ENCODE measurements at regions of chr17 and their contacts with region 1.

Region 1: DNA sequence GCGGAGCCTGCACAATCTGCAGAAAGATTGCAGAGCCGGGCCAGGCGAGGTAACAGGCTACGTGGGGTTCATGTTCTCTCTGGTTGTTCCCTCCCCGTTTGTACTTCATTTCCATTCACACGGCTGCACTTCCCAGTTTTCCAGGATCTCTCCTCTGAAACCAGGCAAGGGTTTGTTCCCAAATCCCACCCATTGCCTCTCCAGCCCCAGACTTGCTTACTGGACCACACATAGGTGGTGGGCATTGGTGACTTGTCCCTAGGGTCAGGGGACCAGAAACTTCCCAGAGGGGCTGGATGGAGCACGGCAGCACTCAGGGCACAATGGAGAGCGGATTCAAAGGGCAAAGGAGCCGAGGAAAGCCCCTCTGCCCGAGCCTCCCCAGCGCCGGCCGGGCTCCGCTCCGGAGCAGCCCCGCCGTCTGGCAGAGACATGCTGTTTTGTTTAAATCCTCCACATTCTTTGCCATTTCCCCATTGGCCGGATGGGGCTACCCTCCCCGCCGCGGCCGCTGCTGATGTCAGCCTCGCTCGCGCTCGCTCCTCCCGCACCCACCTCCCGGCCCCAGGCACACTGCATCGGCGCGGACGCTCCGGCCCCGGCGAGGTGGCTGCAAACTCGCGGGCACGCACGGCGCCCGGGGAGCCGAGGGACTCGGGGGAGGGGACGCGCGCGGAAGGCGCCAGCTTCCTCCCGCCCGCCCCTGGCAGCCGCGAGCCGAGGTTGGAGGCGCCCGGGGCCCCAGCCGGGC is at the start of gene PITPNC1:
- DNase-seq: no peak
- ATAC-seq: peak; percentile 84
- H3K4me3 ChIP-seq: peak within 1 kb of the TSS; percentile 88
- H3K27ac ChIP-seq: peak within 1 kb of the TSS; percentile 87
- H3K4me1 ChIP-seq: no peaks in the 10 kb centered on the region; the same call in 1 of the 2 replicates
- H3K27me3 ChIP-seq: no peaks in the 10 kb centered on the region
- CTCF ChIP-seq: no peak
- EP300 ChIP-seq: no peak
- POLR2A ChIP-seq: peak; percentile 82
- RAD21 ChIP-seq: no peak
- polyA plus RNA-seq, gene PITPNC1: 12.2 to 24.6 TPM

Region 2: DNA sequence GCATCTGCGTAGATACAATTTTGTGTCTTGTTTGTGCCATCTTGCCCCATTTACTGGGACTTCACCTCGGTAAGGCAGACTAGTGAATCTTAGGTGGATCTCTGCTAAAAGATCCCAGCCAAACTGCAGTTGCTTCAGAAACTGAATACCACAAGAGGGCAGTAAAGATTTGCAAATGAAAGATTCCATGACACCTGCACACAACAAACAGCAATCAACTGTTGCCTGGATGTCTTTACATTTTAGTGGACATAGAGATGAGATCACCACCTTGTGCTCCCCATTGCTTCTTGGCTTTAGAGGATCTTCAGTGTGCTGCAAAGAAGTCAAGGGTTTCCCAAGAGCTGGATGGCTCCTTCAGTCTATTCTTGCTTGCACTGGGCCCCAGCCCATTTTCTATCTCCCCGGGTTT is 661.2 kb before region 1 on chr17:
- CTCF ChIA-PET with region 1: interaction called, 3 read pairs
- POLR2A ChIA-PET with region 1: no interaction called
- RAD21 ChIA-PET with region 1: no interaction called
- SMC1A ChIA-PET with region 1: interaction called, 4 read pairs
- in situ Hi-C with region 1: no loop called
- intact Hi-C with region 1: loop called (anchors 10 kb)
- DNase-seq: peak; percentile 53
- ATAC-seq: peak; percentile 34
- H3K4me3 ChIP-seq: no peak overlapping the region
- H3K27ac ChIP-seq: no peak overlapping the region
- H3K4me1 ChIP-seq: peaks cover 26% of the 10 kb centered on the region
- H3K27me3 ChIP-seq: no peaks in the 10 kb centered on the region
- CTCF ChIP-seq: peak; percentile 61 to 87 (median 84)
- EP300 ChIP-seq: no peak
- POLR2A ChIP-seq: no peak
- RAD21 ChIP-seq: peak; percentile 89

Region 3: DNA sequence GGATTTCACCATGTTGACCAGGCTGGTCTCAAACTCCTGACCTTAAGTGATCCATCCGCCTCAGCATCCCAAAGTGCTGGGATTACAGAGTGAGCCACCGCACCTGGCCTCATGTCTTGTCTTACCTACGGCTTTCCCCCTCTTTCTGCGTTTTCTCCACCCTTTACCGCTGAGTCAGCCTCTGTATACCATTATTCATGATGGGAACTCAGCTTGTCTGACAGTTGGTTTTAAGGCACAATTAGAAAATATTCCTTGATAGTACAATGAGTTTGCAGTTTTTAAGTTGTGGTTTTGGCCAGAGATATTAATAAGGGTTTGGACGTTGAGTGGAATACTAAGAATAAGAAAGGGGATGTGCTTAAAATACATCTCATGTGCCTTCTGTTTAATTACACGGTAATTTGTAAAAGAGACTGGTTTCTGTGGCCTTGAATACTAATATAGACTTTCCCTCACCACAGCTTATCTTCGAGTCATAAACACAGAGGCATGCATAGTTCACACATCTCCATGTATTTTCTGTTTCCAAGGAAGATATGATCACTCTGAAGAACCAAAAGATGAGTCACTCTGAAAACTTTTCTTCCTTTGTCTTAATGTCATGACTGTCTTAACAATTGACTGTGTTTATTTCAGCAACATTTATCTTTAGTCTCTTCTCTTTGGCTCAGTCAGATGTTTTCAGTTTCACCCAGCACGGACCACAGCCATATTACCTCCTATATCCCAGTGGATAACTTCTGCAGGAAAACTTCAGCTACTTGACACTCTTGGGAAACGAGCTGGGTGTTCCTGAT is 54.5 kb after region 1 on chr17:
- CTCF ChIA-PET with region 1: interaction called, 14 read pairs
- POLR2A ChIA-PET with region 1: no interaction called
- RAD21 ChIA-PET with region 1: interaction called, 3 read pairs
- SMC1A ChIA-PET with region 1: interaction called, 8 read pairs
- in situ Hi-C with region 1: no loop called
- intact Hi-C with region 1: no loop called
- DNase-seq: no peak
- ATAC-seq: peak; percentile 86
- H3K4me3 ChIP-seq: 0 out of 2 replicates have a peak overlapping the region, but pooled peaks have one; percentile 5
- H3K27ac ChIP-seq: peak overlapping the region; percentile 69
- H3K4me1 ChIP-seq: peaks cover 29% of the 10 kb centered on the region
- H3K27me3 ChIP-seq: no peaks in the 10 kb centered on the region
- CTCF ChIP-seq: no peak
- EP300 ChIP-seq: peak; percentile 77 to 80
- POLR2A ChIP-seq: no peak
- RAD21 ChIP-seq: no peak

Region 4: DNA sequence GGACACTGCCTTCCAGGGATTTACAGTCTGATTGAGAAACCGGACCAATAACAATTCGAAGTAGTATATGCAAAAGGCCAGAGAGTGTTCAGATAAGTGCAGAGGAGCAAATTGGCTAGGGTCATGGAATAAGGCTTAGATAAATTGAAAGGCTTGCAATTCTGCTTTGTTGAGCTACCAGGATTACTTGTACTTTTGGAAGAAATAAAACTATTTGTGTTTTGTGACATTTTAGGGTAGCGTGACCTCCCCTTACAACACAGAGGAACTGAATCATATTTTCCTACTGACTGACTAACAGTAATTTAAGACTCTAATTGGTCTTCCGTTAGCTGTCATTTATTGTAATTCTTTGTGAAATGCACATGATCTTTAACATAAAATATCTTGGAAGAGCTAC is 104.9 kb after region 1 on chr17:
- CTCF ChIA-PET with region 1: interaction called, 291 read pairs
- POLR2A ChIA-PET with region 1: no interaction called
- RAD21 ChIA-PET with region 1: interaction called, 74 read pairs
- SMC1A ChIA-PET with region 1: interaction called, 100 read pairs
- in situ Hi-C with region 1: no loop called
- intact Hi-C with region 1: no loop called
- DNase-seq: no peak
- ATAC-seq: no peak
- H3K4me3 ChIP-seq: no peak overlapping the region
- H3K27ac ChIP-seq: no peak overlapping the region
- H3K4me1 ChIP-seq: peaks cover 17% of the 10 kb centered on the region
- H3K27me3 ChIP-seq: no peaks in the 10 kb centered on the region
- CTCF ChIP-seq: no peak
- EP300 ChIP-seq: no peak
- POLR2A ChIP-seq: no peak
- RAD21 ChIP-seq: no peak

Region 5: DNA sequence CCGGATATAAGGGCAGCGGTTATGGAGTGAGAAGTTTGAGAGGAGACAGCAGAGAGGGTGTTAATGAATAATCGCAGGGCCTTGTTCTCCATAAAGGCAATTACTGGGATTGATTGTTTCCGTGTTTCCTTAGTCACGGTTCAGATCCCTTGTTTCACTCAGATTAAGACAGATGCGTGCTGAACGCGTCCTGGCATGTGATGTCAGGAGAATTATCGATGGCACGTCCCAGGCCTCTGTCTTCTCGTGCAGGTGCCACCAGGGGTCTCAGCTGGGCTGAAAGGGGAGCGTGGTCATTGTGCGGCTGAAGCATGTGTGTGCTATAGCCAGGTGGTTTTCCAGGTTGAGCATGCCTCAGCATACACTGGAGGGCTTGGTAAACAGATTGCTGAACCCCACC is 198.4 kb after region 1 on chr17:
- CTCF ChIA-PET with region 1: interaction called, 17 read pairs
- POLR2A ChIA-PET with region 1: interaction called, 3 read pairs
- RAD21 ChIA-PET with region 1: interaction called, 10 read pairs
- SMC1A ChIA-PET with region 1: interaction called, 17 read pairs
- in situ Hi-C with region 1: no loop called
- intact Hi-C with region 1: loop called (anchors 5 kb)
- DNase-seq: peak; percentile 68
- ATAC-seq: peak; percentile 49
- H3K4me3 ChIP-seq: peak overlapping the region; percentile 68; the same call in 1 of the 2 replicates
- H3K27ac ChIP-seq: peak overlapping the region; percentile 88
- H3K4me1 ChIP-seq: peaks cover 83% of the 10 kb centered on the region
- H3K27me3 ChIP-seq: no peaks in the 10 kb centered on the region
- CTCF ChIP-seq: peak; percentile 53 to 60 (median 59)
- EP300 ChIP-seq: 0 out of 4 replicates have a peak, but pooled peaks of 1 of the 2 experiments have one; percentile 28
- POLR2A ChIP-seq: peak; percentile 60
- RAD21 ChIP-seq: peak; percentile 73

Region 6: GRCh38 chr17:67629971-67630320 is 253.0 kb after region 1 on chr17:
- CTCF ChIA-PET with region 1: interaction called, 49 read pairs
- POLR2A ChIA-PET with region 1: no interaction called
- RAD21 ChIA-PET with region 1: interaction called, 18 read pairs
- SMC1A ChIA-PET with region 1: interaction called, 33 read pairs
- in situ Hi-C with region 1: loop called (anchors 5 kb)
- intact Hi-C with region 1: loop called (anchors 2 kb)
- DNase-seq: no peak
- ATAC-seq: peak; percentile 72
- H3K4me3 ChIP-seq: no peak overlapping the region
- H3K27ac ChIP-seq: no peak overlapping the region; the same call in 1 of the 2 replicates
- H3K4me1 ChIP-seq: peaks cover 15% of the 10 kb centered on the region
- H3K27me3 ChIP-seq: no peaks in the 10 kb centered on the region
- CTCF ChIP-seq: peak; percentile 47 to 53 (median 52); a peak in 4 of 6 replicates
- EP300 ChIP-seq: no peak
- POLR2A ChIP-seq: no peak
- RAD21 ChIP-seq: peak; percentile 68

Region 7: DNA sequence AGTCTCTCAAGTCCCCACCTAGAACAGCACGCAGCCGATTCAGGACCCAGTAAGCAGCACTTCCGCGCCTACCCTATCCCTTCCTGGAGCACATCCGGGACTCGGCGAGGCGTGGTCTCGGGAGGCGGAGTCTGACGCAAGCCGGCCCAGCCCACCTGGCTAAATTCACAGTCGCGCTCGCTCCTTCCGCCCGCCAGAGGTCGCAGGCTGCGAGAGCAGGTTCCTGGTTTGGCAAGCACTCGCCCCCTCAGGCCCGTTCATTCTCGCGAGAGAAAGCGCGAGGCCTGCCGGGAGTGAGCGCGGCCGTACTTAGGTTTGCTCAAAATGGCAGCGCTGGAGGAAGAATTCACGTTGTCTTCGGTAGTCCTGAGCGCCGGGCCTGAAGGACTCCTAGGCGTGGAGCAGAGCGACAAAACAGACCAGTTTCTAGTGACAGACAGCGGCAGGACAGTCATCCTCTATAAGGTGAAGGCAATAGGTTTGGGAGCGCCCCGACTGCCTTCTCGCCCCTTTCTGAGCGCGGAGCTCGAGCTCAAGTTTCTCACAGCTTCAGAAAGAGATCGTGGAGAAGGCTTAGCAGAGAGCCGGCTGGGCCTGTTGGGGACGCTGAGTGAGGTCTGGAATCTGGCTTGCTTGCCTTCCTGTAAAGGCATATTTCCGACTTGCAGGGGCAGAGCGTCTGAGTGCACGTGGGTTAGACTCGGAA is 340.9 kb after region 1 on chr17 and contains the start of gene NOL11:
- CTCF ChIA-PET with region 1: interaction called, 16 read pairs
- POLR2A ChIA-PET with region 1: interaction called, 4 read pairs
- RAD21 ChIA-PET with region 1: interaction called, 4 read pairs
- SMC1A ChIA-PET with region 1: interaction called, 5 read pairs
- in situ Hi-C with region 1: no loop called
- intact Hi-C with region 1: loop called (anchors 10 kb)
- DNase-seq: peak; percentile 97
- ATAC-seq: peak; percentile 95
- H3K4me3 ChIP-seq: peak within 1 kb of the TSS; percentile 95
- H3K27ac ChIP-seq: peak within 1 kb of the TSS; percentile 91
- H3K4me1 ChIP-seq: peaks cover 6% of the 10 kb centered on the region
- H3K27me3 ChIP-seq: no peaks in the 10 kb centered on the region
- CTCF ChIP-seq: peak; percentile 94 to 99 (median 96); a peak in 5 of 6 replicates
- EP300 ChIP-seq: no peak
- POLR2A ChIP-seq: peak; percentile 91
- RAD21 ChIP-seq: peak; percentile 56
- polyA plus RNA-seq, gene NOL11: 92.6 to 130 TPM

Region 8: DNA sequence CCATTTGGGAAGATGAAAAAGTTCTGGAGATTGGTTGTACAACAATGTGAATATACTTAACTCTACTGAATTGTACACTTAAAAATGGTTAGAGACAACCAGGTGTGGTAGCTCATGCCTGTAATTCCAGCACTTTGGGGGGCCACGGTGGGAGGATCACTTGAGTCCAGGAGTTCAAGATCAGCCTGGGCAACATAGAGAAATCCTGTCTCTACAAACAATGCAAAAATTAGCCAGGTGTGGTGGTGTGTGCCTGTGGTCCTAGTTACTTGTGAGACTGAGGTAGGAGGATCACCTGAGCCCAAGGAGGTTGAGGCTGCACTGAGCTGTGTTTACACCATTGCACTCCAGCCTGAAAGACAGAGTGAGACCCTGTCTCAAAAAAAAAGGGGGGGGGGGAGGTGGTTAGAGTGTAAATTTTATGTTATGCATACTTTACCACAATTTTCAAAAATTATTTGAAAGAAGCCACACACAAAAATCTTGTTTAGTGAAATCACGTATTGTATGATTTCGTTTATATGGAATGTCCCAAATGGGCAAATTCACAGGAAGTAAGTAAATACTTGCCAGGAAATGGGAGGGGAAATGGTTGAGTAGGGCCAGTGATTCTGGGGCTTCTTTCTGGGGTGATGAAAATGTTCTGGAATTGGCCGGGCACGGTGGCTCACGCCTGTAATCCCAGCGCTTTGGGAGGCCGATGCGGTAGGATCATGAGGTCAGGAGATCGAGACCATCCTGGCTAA is 833.8 kb after region 1 on chr17:
- CTCF ChIA-PET with region 1: no interaction called
- POLR2A ChIA-PET with region 1: no interaction called
- RAD21 ChIA-PET with region 1: no interaction called
- SMC1A ChIA-PET with region 1: no interaction called
- in situ Hi-C with region 1: no loop called
- intact Hi-C with region 1: no loop called
- DNase-seq: no peak
- ATAC-seq: no peak
- H3K4me3 ChIP-seq: no peak overlapping the region
- H3K27ac ChIP-seq: no peak overlapping the region
- H3K4me1 ChIP-seq: no peaks in the 10 kb centered on the region; the same call in 1 of the 2 replicates
- H3K27me3 ChIP-seq: no peaks in the 10 kb centered on the region
- CTCF ChIP-seq: no peak
- EP300 ChIP-seq: no peak
- POLR2A ChIP-seq: no peak
- RAD21 ChIP-seq: no peak

Measured in GM12878 (cell line).